ENCODE measurements at regions of chr9 and their contacts with region 1.

Region 1: DNA sequence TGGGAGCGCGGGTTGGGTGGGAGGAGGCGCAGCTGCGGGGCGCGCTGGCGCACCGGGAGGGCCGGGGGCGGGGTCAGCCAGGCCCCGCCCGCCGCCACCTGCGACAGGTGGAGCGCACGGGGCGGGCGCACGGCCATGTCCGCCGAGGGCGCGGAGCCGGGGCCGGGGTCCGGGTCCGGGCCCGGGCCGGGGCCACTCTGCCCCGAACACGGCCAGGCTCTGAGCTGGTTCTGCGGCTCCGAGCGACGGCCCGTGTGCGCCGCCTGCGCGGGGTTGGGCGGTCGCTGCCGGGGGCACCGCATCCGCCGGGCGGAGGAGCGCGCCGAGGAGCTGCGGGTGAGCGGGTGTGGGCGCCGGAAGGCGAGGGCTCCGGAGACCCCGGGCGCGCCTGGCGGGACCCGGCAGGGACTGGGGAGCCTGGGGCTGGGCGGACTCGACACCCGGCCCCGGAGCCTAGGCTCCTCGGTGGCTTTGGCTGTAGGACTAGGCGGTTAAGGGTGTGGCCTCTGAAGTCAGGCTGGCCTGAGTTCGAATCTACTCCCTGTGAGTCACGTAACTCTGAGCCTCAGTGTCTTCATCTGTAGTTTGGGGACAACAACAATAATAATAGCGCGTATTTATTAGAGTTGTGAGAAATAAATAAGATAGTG is at the start of gene BSPRY:
- DNase-seq: peak; percentile 31
- H3K4me3 Mint-ChIP-seq: peak within 1 kb of the TSS; percentile 78
- H3K27ac Mint-ChIP-seq: peak within 1 kb of the TSS; percentile 78
- H3K4me1 Mint-ChIP-seq: peaks cover 35% of the 10 kb centered on the region
- H3K27me3 Mint-ChIP-seq: peaks cover 26% of the 10 kb centered on the region
- total RNA-seq, gene BSPRY: 2.0 to 2.3 TPM

Region 2: GRCh38 chr9:113368982-113369869 is 19.7 kb after region 1 on chr9:
- CTCF ChIA-PET with region 1: interaction called, 34 read pairs
- POLR2A ChIA-PET with region 1: no interaction called
- DNase-seq: no peak
- H3K4me3 Mint-ChIP-seq: no peak overlapping the region
- H3K27ac Mint-ChIP-seq: no peak overlapping the region
- H3K4me1 Mint-ChIP-seq: no peaks in the 10 kb centered on the region
- H3K27me3 Mint-ChIP-seq: no peaks in the 10 kb centered on the region

Measured in activated CD4-positive, alpha-beta T cell treated with anti-CD3 and anti-CD28 coated beads, Interleukin-2, amount 10 ng/mL, durations not matched to agents 7 days and 5 days (primary cell).